ENCODE measurements at regions of chr20 and their contacts with region 1.

Region 1: DNA sequence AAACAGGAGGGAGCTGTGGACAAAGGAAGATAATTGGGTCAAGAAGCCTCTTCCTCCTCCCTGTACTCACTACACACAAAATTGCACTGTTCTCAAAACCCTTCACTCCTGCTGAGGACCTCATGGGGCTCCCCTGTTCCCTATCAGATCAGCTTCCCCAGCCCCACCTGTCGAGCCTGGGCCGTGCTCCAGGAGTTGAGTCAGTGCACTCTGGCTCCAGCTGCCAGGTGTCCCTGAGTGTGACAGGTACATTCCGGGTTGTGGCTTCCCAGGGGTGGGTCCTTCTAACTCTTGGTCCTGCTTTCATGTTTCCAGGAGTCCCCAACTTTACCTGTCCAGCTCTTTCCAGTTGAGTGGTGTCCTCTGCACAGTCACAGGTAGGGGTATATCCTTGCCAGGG is 8.4 kb downstream of the RAB5IF start:
- DNase-seq: no peak
- H3K4me3 ChIP-seq: no peak overlapping the region
- H3K27ac ChIP-seq: no peak overlapping the region
- H3K4me1 ChIP-seq: no peaks in the 10 kb centered on the region
- H3K27me3 ChIP-seq: no peaks in the 10 kb centered on the region
- CTCF ChIP-seq: no peak
- EP300 ChIP-seq: no peak
- POLR2A ChIP-seq: no peak

Region 2: DNA sequence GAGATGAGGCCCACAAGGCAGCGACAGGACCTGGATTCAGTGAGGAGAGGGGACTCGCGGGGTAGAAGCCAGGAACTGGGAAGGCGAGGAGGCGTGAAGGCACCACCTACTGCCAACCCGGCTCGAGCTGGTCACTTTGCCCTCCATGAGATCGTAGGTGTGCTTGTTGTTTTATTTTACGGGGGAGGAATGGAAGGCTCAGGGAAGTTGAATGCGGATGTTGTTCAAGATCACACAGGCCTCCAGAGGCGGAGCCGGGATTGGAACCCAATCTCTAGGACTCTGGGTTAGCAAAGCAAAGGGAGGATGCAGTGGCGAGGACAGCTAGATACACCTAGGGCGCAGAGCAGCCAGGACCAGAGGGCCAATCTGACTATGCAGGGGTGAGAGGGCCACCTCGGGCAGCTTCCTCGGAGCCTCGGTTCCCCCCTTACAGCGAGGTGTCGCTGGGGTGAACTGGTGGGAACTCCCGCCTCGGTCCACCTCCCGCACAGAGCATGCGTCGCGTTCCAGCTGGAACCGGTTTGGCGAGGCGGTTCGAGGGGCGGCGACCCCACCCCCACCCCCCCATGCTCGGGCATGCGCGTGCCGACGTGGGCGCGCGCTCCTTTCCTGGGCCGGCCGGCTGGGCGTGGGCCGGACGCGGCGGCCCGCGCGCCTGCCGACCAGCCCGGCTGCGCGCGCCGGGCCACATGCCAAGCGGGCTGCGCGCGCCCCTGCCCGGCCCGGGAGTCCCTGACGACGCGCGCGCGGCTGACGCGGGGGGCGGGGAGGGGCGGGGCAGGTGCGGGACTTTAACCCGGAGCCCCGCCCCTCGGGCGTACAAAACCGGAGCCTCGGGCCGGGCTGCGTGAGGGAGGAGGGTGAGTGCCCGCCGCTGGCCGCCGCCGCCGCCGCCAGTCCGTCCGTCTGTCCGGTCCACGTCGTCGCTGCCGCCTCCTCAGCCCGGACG is 153.1 kb before region 1 on chr20:
- intact Hi-C with region 1: no loop called
- DNase-seq: peak; percentile 96
- H3K4me3 ChIP-seq: peak overlapping the region; percentile 65 to 88 (median 81)
- H3K27ac ChIP-seq: peak overlapping the region; percentile 93 to 99 (median 98)
- H3K4me1 ChIP-seq: peaks cover 0 to 43% (median 38%) of the 10 kb centered on the region in 4 donors
- H3K27me3 ChIP-seq: no peaks in the 10 kb centered on the region
- CTCF ChIP-seq: no peak
- EP300 ChIP-seq: peak in 1 of 4 donors; percentile 23
- POLR2A ChIP-seq: peak; percentile 23 to 28

Region 3: GRCh38 chr20:36886859-36887751 is 273.1 kb after region 1 on chr20:
- intact Hi-C with region 1: loop called (anchors 5 kb)
- DNase-seq: peak; percentile 91
- H3K4me3 ChIP-seq: no peak overlapping the region
- H3K27ac ChIP-seq: peak overlapping the region in 3 of 4 donors; percentile 0 to 36 (median 33)
- H3K4me1 ChIP-seq: peaks cover 0 to 12% (median 7%) of the 10 kb centered on the region in 4 donors
- H3K27me3 ChIP-seq: no peaks in the 10 kb centered on the region
- CTCF ChIP-seq: peak; percentile 88 to 98 (median 94)
- EP300 ChIP-seq: no peak
- POLR2A ChIP-seq: no peak

Measured in sigmoid colon (tissue), 7 donors.